Activated CD8-positive, alpha-beta memory T cell treated with anti-CD3 and anti-CD28 coated beads, Interleukin-2, amount 10 ng/mL, durations not matched to agents 7 days and 5 days (primary cell): ENCODE measurements at regions of chr17 and their contacts with region 1.

Region 1: GRCh38 chr17:65100316-65101140 is 36.6 kb upstream of the RGS9 start:
- DNase-seq: peak; percentile 85
- ATAC-seq: peak; percentile 92
- H3K4me3 Mint-ChIP-seq: peak overlapping the region; percentile 77
- H3K27ac Mint-ChIP-seq: peak overlapping the region; percentile 90
- H3K4me1 Mint-ChIP-seq: peaks cover 22% of the 10 kb centered on the region
- H3K27me3 Mint-ChIP-seq: peaks cover 5% of the 10 kb centered on the region

Region 2: DNA sequence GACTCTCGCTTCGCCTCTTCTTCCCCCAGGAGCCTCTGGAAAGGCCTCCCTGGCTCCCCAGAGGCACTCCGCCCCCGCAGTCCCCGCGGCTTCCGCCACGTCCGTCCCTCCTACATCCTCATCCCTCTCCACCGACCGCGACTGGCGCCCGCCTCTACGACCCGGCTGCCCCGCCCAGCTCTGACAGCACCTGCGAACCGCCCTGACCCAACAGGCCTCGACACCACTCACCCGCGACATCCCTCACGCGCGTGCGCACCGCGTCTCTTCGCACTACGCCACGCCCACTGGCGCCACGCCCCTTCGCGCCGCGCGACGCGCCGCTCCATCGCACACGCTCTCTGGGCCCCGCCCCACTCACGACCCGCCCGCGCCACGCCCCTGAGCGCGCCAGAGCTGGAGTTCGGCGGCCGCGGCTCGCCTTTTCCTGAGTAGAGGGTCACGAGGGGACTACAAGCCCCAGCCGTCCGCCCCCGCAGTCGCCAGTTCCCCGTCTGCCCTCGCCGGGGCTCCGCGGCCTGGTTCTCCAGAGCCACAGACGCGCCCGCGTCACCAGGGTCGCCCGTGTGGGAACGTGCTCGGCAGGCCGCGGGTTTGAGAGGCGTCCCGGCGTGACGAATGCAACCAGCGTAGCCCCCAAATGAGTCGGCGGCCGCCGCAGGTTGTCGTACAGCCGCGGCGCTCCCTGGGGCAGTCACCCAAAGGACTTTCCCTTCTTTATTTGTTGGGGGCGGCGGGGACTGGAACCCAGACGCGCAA is 125.0 kb before region 1 on chr17:
- CTCF ChIA-PET with region 1: interaction called, 12 read pairs
- DNase-seq: peak; percentile 98
- ATAC-seq: peak; percentile 87
- H3K4me3 Mint-ChIP-seq: peak overlapping the region; percentile 88
- H3K27ac Mint-ChIP-seq: peak overlapping the region; percentile 99
- H3K4me1 Mint-ChIP-seq: peaks cover 41% of the 10 kb centered on the region
- H3K27me3 Mint-ChIP-seq: no peaks in the 10 kb centered on the region

Region 3: DNA sequence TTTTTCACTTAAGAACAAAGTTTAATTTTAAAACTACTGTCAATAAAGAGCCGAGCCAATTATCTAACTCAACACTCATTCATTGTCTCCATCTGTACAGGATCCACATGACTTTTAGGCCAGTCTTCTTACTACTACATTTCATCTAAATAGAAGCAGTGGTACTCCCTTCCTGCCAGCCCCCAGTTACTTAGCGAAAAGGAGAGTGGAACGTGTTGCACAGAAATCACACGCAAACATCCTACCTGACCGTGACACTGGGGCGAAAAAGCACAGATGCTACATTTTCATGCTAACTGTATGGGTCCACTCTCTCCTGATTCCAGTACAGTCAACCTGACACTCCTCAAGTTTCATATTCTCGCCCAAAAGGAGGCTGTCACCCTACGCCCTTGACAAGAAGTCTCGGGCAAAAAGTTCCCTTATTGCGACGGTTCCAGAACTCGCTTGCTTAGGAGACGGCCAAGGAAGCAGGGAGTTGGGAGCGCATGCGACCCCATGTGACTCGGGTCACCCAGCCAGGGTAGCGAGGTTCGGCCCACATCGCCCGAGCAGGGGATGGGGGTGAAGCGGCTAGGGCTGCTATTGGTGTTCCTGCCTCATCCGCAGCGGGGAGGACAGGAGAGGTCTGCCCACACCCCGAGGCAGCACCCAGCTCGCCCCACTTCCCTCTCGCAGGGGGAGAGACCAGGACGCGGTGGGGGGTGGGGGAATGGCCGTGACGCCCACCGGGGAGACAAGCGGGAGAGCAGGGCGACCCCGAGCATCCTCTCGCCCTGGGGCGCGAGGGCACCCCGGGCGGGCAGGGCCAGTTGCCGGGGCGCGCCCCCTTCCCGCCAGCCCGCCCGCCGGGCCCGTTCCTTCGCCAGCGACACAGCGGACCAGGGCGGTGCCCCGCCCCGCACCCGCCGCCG is 44.9 kb before region 1 on chr17:
- CTCF ChIA-PET with region 1: interaction called, 28 read pairs
- DNase-seq: peak; percentile 74
- ATAC-seq: peak; percentile 35
- H3K4me3 Mint-ChIP-seq: peak overlapping the region; percentile 95
- H3K27ac Mint-ChIP-seq: peak overlapping the region; percentile 82
- H3K4me1 Mint-ChIP-seq: peaks cover 43% of the 10 kb centered on the region
- H3K27me3 Mint-ChIP-seq: no peaks in the 10 kb centered on the region

Region 4: GRCh38 chr17:65122836-65123756 is 22.6 kb after region 1 on chr17:
- CTCF ChIA-PET with region 1: interaction called, 14 read pairs
- DNase-seq: peak; percentile 91
- ATAC-seq: peak; percentile 83
- H3K4me3 Mint-ChIP-seq: peak overlapping the region; percentile 75
- H3K27ac Mint-ChIP-seq: peak overlapping the region; percentile 88
- H3K4me1 Mint-ChIP-seq: peaks cover 26% of the 10 kb centered on the region
- H3K27me3 Mint-ChIP-seq: peaks cover 10% of the 10 kb centered on the region

Region 5: DNA sequence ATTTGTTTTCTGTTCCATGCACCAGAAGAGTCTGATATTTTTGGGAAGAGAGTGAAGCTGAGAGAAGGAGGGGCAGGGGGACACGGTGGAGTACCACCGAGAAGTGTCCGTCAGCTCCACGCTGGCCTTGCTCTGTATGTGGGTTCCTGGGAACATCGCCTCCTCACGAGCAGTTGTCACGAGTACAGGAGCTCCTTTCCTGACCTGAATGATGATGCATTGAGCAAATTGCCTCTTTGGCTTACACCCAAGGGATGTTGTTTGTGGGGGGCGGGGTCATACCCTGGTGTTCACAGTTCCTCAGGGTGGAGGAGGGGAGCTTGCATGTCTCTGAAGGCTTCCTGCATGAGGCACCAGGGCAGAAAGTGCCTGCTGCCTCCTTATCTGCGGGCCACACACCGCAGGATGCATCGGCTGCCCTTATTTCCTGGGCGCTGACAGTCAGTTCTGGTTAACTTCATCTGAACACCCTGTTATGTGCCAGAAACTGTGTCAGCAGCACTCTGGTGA is 72.8 kb after region 1 on chr17:
- CTCF ChIA-PET with region 1: no interaction called
- DNase-seq: peak; percentile 94
- ATAC-seq: peak; percentile 92
- H3K4me3 Mint-ChIP-seq: no peak overlapping the region
- H3K27ac Mint-ChIP-seq: no peak overlapping the region
- H3K4me1 Mint-ChIP-seq: peaks cover 31% of the 10 kb centered on the region
- H3K27me3 Mint-ChIP-seq: no peaks in the 10 kb centered on the region

Region 6: DNA sequence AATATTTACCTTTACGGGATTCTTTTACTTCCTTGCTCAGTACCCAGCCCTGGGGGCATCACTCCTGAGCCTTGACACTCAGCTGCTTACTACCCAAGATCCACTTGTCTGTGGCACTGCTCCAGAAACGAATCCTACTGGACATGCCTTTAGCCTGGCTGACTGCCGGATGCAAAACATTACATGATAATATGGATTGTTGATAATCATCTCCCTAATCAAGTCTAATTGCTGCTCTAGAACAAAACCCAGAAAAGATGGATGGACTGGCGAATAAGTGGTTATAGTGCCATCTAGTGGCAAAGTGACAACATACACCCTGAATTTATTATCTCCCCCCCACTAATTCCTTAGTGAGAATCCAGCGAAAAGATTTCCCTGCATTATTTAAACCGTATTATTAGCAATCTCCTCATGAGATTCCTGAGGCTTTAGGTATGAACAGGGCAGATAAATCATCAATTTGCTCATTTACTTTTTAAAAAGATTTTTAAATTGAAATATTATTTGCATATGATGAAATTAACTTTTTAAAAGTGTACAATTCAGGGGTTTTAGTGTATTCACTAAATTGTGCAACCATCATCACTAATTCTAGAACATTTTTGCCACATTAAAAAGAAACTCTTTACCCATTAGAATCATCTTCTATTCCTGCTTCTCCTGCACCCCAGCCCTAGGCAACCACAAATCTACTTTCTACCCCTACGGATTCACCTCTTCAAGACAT is 98.3 kb after region 1 on chr17:
- CTCF ChIA-PET with region 1: interaction called, 19 read pairs
- DNase-seq: no peak
- ATAC-seq: peak; percentile 65
- H3K4me3 Mint-ChIP-seq: no peak overlapping the region
- H3K27ac Mint-ChIP-seq: no peak overlapping the region
- H3K4me1 Mint-ChIP-seq: peaks cover 12% of the 10 kb centered on the region
- H3K27me3 Mint-ChIP-seq: peaks cover 3% of the 10 kb centered on the region